ENCODE measurements at regions of chr11 and their contacts with region 1.

Region 1: DNA sequence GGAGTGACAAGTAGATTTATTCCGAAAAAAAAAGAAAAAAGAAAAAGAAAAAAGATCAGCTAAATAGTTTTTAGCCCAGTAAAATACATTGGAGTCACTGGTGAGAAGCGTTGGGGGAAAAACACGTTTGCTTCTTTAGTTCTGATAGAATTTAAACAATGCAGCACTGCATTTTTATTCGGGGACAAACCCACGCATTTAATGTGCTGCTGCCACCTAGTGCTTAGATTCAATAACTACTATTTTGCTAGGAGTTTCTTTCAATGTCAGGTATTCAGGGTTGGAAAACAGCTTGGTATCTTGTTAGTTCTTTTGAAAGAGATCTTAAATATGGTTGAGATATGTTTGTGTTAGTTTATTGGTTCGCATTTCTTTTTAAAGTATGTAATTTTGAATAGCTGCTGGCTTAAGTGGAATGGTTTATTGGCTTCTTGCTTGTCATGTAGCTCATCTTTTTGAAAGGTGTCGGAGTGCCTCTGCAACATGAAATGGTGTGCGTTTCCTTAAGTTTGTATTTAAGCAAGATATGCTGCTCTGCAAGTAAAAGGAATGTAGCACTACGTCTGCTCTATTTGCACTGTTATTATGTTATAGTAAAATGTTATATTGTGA is 41.9 kb downstream of the SVIP start:
- DNase-seq: peak; percentile 28
- CTCF ChIP-seq: peak; percentile 59

Region 2: GRCh38 chr11:22666688-22667439 is 120.8 kb before region 1 on chr11:
- CTCF ChIA-PET with region 1: interaction called, 17 read pairs
- POLR2A ChIA-PET with region 1: no interaction called
- DNase-seq: peak; percentile 62
- CTCF ChIP-seq: no peak

Region 3: DNA sequence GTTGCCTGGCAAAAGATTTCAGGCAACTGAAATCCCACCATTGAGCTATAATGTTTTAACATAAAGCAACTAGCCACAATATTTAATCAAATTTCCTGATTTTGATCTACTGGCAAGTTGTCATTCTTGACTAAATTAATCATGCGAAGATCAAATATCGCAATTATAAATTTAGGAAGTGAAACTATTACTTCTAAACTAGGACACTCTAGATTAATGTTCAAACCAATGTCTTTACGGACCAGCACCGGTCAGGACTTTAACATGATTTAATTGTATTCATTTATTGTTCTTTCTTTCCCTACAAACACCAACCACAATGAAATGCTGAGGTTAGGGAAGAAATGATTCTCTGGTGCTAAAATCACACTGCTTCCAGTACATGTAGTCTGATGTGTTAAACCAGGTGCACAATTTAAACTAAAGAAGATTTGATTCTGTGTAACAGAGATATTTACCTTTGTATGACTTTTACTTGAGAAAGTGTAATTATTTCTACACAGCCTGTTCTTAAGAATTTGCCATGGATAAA is 106.3 kb before region 1 on chr11:
- CTCF ChIA-PET with region 1: interaction called, 6 read pairs
- POLR2A ChIA-PET with region 1: interaction called, 14 read pairs
- DNase-seq: no peak
- CTCF ChIP-seq: no peak

Region 4: DNA sequence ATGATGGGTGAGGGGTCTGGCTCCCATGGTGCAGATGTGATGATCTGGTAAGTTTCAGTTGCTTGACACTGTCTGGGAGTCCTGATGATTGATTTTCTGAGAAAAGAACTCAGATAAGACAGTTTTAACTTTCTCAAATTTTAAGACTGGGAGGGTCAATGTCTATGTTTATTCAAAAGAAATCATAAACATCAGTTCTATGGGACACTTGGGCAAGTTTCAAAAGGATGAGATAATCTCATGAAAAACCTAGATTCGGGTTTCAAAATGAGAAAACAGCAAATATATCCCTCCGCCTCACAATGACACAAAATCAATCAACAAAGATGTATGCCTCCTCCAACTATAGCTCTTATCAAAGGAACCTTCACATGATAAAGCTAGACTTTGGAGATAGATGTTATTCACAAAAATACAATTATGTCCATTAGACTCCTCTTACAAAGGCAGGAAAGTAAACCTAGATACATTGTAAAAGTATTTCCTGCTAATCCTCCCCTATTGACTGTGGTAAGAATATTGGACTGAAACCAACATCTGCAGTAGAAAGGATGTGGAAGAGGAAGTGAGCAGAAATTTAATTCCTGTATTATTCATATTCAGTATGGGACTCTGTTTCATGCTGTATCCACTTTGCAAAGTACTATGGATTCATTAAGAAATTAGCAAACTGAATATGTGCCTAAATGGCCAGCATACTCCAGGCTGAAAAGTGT is 20.4 kb after region 1 on chr11:
- CTCF ChIA-PET with region 1: interaction called, 22 read pairs
- POLR2A ChIA-PET with region 1: no interaction called
- DNase-seq: peak; percentile 14
- CTCF ChIP-seq: no peak

Region 5: DNA sequence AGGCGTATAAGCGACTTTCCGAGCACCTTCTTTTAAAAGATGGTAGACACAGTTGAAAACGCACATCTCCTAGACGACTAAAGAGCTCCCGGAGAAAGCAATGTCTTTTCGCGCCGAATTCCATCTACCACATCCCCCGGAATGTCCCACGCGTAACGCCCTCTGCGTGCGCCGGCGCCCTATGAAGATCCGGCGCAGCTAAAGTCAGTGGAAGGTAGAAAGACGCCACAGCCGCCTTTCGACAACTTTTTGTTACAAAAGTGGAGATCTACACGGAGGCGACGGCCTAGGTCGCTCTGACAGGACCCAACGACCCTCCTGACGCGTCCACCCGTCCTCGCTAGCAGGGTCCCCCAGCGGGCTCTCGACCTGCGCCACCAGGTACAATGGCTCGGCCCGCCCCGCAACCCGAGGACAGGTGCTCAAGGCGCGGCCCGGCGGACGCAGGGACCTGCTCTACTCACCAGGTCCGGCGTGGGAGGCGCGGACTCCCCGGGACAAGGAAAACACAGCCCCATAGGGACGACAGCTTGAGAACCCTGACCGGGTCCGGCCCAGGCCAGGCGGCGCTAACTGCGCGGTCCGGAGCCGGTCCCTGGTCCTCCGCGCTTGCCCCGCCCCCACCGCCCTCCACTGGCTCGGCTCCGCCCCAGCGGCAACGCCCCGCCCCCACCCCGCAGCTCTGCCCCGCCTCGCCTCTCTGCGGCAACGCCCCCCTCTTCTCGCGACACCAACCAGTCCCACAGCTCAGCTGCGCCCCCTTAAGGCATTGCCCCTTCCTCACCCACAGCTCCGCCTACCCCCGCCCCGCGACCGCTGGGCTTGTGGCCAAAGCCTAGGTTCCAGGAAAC is 41.8 kb after region 1 on chr11 and contains the start of gene SVIP:
- CTCF ChIA-PET with region 1: interaction called, 17 read pairs
- POLR2A ChIA-PET with region 1: no interaction called
- DNase-seq: peak; percentile 93
- CTCF ChIP-seq: peak; percentile 95

Measured in GM10248 (cell line).